MCF 10A (cell line): ENCODE measurements at regions of chr11 and their contacts with region 1.

Region 1: DNA sequence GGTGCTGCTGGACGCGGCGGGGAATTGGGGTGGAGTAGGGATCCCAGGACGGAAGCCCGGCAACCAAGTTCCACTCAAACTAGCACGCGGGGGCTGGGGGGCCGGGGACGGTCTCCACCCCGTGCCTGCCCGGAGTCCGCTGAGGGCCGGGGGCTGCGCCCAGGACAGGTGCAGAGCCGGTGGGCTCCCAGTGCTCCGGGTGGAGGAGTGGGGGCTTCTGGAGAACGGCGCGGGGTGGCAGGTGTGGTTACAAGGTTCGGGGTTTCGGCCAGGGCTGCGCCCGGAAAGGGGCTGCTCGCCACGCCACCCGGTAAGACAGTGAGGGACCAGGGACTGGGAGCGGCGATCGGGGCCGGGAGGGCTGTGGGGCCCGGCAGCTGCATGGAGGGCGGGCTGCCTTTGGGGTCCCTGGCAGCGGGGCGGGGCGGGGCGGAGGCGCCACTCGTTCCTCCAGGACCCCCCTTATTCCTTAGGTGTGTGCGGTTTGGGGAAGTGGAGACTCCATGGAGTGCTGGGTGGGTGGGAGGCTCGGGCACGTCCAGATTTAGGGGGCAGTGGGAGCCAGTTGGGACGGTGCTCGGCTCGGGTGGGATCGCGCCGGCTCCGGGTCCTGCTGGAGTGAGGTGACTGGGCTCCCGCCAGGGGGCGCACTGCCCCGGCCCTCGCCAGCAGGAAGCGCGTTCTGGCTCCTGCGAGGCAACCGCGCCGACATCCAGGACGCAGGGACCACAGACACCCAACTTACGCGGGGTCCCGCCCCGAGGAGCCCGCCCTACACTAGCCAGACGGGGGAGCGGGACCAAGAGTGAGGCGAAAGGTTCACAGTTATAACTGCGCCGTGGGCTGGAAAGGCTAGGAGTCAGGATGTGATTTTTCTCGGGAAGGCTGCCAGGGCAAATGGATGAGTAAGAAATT is 868 bp downstream of the TSPAN18 start:
- DNase-seq: peak; percentile 71
- H3K4me3 Mint-ChIP-seq: peak overlapping the region; percentile 60
- H3K27ac Mint-ChIP-seq: no peak overlapping the region
- H3K4me1 Mint-ChIP-seq: no peaks in the 10 kb centered on the region
- H3K27me3 Mint-ChIP-seq: peaks cover 33% of the 10 kb centered on the region
- CTCF ChIP-seq: peak; percentile 92

Region 2: DNA sequence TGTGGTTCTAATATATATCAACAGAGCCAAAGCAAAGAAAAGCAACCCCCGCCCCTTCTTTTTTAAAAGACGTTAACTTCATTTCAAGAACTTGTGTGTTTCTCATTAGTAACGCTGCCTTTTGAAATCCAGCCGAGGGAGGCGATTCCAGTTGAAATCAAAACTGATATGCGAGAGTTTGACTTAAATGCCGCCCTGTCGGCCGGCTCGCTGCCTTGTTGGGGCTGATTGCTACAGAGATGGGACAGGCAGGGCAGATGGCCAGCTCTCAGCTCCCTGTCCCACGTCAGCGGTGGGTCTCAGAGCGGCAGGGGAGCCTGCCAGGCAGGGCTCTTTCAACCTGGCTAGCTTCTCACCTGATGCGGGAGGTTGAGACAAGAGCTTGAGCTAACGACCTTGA is 365.8 kb before region 1 on chr11:
- CTCF ChIA-PET with region 1: no interaction called
- POLR2A ChIA-PET with region 1: no interaction called
- intact Hi-C with region 1: no loop called
- DNase-seq: no peak
- H3K4me3 Mint-ChIP-seq: no peak overlapping the region
- H3K27ac Mint-ChIP-seq: no peak overlapping the region
- H3K4me1 Mint-ChIP-seq: no peaks in the 10 kb centered on the region
- H3K27me3 Mint-ChIP-seq: peaks cover 12% of the 10 kb centered on the region
- CTCF ChIP-seq: no peak

Region 3: GRCh38 chr11:44893846-44894617 is 166.4 kb after region 1 on chr11:
- CTCF ChIA-PET with region 1: interaction called, 7 read pairs
- POLR2A ChIA-PET with region 1: no interaction called
- intact Hi-C with region 1: loop called (anchors 1 kb)
- DNase-seq: peak; percentile 54
- H3K4me3 Mint-ChIP-seq: no peak overlapping the region
- H3K27ac Mint-ChIP-seq: no peak overlapping the region
- H3K4me1 Mint-ChIP-seq: no peaks in the 10 kb centered on the region
- H3K27me3 Mint-ChIP-seq: peaks cover 35% of the 10 kb centered on the region
- CTCF ChIP-seq: peak; percentile 96

Region 4: DNA sequence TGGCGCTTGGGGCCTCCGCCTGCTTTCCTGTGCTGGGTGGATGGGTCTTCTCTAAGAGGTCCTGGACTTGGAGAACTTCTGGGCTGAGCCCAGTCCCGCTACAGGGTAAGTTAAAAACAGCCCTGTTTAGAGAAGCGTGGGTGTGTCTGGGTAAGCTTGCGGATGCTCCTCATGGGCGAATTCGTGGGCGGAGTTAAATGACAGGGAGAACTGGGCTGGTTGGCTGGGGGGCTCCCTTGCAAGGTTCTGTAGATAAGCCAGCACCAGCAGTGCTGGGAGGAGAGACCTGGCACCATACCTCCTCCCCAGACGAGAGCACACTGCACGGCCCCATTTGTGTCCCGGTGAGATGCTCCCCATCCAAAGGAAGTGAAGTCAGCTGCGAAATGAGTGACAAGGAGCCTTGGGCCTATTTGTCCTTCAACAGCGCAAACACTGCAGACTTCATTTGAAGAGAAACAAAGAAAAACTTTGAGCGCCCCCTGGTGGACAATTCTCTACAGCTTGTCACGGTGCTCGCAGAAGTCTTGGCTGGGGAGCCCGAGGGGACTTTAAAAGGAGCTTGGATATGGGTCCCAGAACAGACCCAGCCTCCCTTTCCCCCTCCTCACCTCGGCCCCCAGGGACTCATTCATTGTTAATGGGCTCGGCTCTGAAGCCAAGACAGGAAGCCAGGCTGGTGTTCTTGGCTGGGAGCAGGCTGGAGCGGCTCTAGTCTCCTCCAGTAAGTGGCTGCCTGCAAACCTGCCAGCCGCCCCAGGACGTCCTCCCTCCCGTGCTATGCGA is 183.6 kb after region 1 on chr11:
- CTCF ChIA-PET with region 1: interaction called, 12 read pairs
- POLR2A ChIA-PET with region 1: no interaction called
- intact Hi-C with region 1: loop called (anchors 1 kb)
- DNase-seq: peak; percentile 82
- H3K4me3 Mint-ChIP-seq: no peak overlapping the region
- H3K27ac Mint-ChIP-seq: no peak overlapping the region
- H3K4me1 Mint-ChIP-seq: no peaks in the 10 kb centered on the region
- H3K27me3 Mint-ChIP-seq: no peaks in the 10 kb centered on the region
- CTCF ChIP-seq: peak; percentile 79